Sciatic nerve (tissue), 2 donors: ENCODE measurements at regions of chr3 and their contacts with region 1.

Region 1: GRCh38 chr3:197256836-197257444 is 41.5 kb downstream of the DLG1 start:
- DNase-seq: no peak
- ATAC-seq: no peak

Region 2: GRCh38 chr3:197367081-197367780 is 110.3 kb after region 1 on chr3:
- intact Hi-C with region 1: no loop called
- DNase-seq: no peak
- ATAC-seq: no peak

Region 3: GRCh38 chr3:197511130-197511529 is 254.2 kb after region 1 on chr3:
- intact Hi-C with region 1: loop called (anchors 2 kb)
- DNase-seq: no peak
- ATAC-seq: no peak

Region 4: GRCh38 chr3:197801891-197802778 is 545.2 kb after region 1 on chr3:
- intact Hi-C with region 1: no loop called
- DNase-seq: no peak
- ATAC-seq: no peak